Dendritic cell treated with granulocyte-macrophage colony-stimulating factor and Interleukin-4, amounts not matched to agents 40 ng/mL and 50 ng/mL, for 4 days (primary cell): ENCODE measurements at regions of chr4 and their contacts with region 1.

Region 1: DNA sequence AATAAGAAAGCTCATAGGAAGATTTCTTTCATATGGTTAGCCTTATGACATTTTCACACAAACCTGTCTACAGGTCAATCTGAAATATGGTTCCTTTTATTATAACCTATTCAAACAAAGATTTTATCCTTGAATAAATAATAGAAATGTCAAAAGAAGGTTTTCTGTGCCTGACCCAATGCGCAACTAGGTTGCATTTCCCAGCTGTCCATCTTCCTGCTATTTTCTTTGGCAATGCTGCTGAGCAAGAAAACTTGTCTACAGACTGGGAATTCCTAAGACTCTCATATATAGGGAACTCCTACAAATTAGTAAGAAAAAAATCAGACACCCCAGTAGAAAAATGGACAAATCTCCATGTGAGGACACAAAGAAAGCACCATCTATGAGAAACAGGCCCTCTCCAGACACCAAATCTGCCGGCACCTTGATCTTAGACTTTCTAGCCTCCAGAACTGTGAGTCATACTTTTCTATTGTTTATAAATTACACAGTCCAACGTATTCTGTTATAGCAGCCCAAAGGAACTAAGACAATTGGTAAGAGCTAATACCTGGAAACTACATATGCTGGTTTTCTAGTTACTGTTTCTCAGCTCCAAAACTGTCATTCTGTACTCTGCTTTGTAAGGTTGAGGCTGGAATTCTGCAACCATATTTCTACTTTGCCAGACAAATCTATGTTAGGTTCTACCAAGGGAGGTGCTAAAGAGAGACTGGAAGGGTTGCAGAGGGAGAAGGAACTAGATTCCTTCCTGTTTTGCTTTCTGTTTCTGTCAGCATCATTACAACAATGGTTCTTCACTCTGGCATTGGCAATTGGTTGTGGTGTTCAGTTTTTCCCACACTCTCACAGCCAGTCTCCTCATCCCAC is 35.8 kb upstream of the FAM241A start:
- H3K4me3 Mint-ChIP-seq: no peak overlapping the region
- H3K27ac Mint-ChIP-seq: peak overlapping the region; percentile 34
- H3K4me1 Mint-ChIP-seq: peaks cover 31% of the 10 kb centered on the region
- H3K27me3 Mint-ChIP-seq: no peaks in the 10 kb centered on the region

Region 2: DNA sequence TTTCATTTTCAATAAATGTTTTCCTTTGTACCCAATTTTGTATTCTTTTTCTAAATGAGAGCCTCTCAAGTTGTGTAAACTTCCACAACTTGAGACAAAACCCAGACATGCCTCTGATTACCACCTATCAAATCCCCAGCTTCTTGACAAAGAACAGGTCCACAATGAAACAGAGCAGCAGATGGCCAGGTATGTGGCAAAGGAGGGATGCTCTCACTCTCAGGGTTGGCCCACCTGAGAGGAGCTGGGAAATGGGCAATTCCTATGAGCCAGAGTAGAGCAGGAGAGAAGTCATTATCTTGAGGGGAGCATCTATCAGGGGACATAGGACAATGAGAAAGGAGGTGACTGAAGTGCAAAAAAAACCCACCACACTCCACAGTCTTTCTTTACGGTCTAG is 237.6 kb before region 1 on chr4:
- intact Hi-C with region 1: no loop called
- H3K4me3 Mint-ChIP-seq: no peak overlapping the region
- H3K27ac Mint-ChIP-seq: no peak overlapping the region
- H3K4me1 Mint-ChIP-seq: no peaks in the 10 kb centered on the region
- H3K27me3 Mint-ChIP-seq: no peaks in the 10 kb centered on the region

Region 3: DNA sequence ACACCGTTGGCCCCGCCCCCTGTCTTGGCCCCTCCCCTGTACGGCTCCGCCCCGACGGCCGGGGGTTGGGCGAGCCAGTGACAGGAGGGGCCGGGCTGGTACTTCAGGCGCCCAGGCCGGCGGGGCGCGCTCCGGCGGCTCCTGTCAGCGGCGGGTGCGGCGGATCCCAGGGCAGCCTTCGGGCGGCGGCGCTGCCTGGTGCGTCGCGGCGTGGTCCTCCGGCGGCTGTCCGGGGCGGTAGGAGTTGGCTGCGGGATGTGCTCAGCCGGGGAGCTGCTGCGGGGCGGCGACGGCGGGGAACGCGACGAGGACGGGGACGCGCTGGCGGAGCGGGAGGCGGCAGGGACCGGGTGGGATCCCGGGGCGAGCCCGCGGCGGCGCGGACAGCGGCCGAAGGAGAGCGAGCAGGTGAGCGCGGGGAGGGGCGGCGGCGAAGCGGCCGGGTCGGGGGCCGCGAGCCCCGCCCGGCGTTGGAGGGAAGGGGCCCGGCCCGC is 36.0 kb after region 1 on chr4 and contains the start of gene FAM241A:
- intact Hi-C with region 1: loop called (anchors 5 kb)
- H3K4me3 Mint-ChIP-seq: peak within 1 kb of the TSS; percentile 86
- H3K27ac Mint-ChIP-seq: peak within 1 kb of the TSS; percentile 85
- H3K4me1 Mint-ChIP-seq: peaks cover 63% of the 10 kb centered on the region
- H3K27me3 Mint-ChIP-seq: no peaks in the 10 kb centered on the region

Region 4: GRCh38 chr4:112321776-112322684 is 212.6 kb after region 1 on chr4:
- intact Hi-C with region 1: no loop called
- H3K4me3 Mint-ChIP-seq: no peak overlapping the region
- H3K27ac Mint-ChIP-seq: no peak overlapping the region
- H3K4me1 Mint-ChIP-seq: peaks cover 28% of the 10 kb centered on the region
- H3K27me3 Mint-ChIP-seq: no peaks in the 10 kb centered on the region